Activated naive CD4-positive, alpha-beta T cell treated with anti-CD3 and anti-CD28 coated beads for 36 hours (primary cell): ENCODE measurements at regions of chr6 and their contacts with region 1.

Region 1: DNA sequence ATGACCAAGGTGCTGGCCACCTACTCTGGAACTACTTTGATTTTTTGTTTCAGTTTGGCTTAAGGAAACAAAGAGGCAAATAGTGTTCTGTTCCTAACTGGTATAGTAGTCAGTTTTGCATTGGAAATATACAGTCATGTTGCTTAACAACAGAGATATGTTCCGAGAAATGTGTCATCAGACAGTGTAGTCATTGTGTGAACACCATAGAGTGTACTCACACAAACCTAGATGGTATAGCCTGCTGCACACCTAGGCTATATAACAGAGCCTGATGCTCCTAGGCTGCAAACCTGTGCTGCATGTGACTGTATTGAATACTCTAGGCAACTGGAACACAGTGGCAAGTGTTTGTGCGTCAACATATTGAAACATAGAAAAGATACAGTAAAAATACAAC is 80.4 kb downstream of the ARID1B start:
- DNase-seq: peak; percentile 57
- H3K4me3 Mint-ChIP-seq: no peak overlapping the region
- H3K27ac Mint-ChIP-seq: peak overlapping the region; percentile 89
- H3K4me1 Mint-ChIP-seq: peaks cover 77% of the 10 kb centered on the region
- H3K27me3 Mint-ChIP-seq: no peaks in the 10 kb centered on the region

Region 2: GRCh38 chr6:156699017-156699421 is 158.6 kb before region 1 on chr6:
- CTCF ChIA-PET with region 1: no interaction called
- intact Hi-C with region 1: loop called (anchors 5 kb)
- DNase-seq: peak; percentile 23
- H3K4me3 Mint-ChIP-seq: no peak overlapping the region
- H3K27ac Mint-ChIP-seq: no peak overlapping the region
- H3K4me1 Mint-ChIP-seq: peaks cover 23% of the 10 kb centered on the region
- H3K27me3 Mint-ChIP-seq: peaks cover 5% of the 10 kb centered on the region

Region 3: GRCh38 chr6:156791320-156791850 is 66.2 kb before region 1 on chr6:
- CTCF ChIA-PET with region 1: no interaction called
- intact Hi-C with region 1: loop called (anchors 1 kb)
- DNase-seq: peak; percentile 60
- H3K4me3 Mint-ChIP-seq: no peak overlapping the region
- H3K27ac Mint-ChIP-seq: peak overlapping the region; percentile 48
- H3K4me1 Mint-ChIP-seq: peaks cover 89% of the 10 kb centered on the region
- H3K27me3 Mint-ChIP-seq: no peaks in the 10 kb centered on the region

Region 4: DNA sequence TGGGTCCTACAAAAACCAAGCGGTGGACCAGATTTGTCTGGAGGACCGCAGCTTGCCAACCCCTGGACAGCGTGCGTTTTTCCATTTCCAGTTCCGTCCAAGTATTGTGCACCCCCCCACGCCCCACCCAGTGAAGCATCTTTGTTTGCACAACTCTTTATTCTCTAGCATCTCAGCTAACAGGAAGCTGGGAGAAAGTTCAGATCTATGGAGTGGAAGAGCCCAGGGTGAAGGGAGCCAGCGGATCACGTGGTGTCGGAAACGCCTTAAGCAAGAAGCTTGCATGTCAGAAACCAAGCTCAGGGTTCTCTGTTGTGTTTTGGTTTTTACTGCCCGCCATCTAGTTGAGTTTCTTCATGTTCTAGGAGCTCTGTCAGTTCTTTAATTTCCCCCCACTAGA is 50.5 kb before region 1 on chr6:
- CTCF ChIA-PET with region 1: no interaction called
- intact Hi-C with region 1: no loop called
- DNase-seq: no peak
- H3K4me3 Mint-ChIP-seq: no peak overlapping the region
- H3K27ac Mint-ChIP-seq: no peak overlapping the region
- H3K4me1 Mint-ChIP-seq: peaks cover 85% of the 10 kb centered on the region
- H3K27me3 Mint-ChIP-seq: no peaks in the 10 kb centered on the region

Region 5: GRCh38 chr6:156876302-156876701 is 18.7 kb after region 1 on chr6:
- CTCF ChIA-PET with region 1: no interaction called
- intact Hi-C with region 1: no loop called
- DNase-seq: peak; percentile 19
- H3K4me3 Mint-ChIP-seq: no peak overlapping the region
- H3K27ac Mint-ChIP-seq: no peak overlapping the region
- H3K4me1 Mint-ChIP-seq: peaks cover 57% of the 10 kb centered on the region
- H3K27me3 Mint-ChIP-seq: no peaks in the 10 kb centered on the region

Region 6: DNA sequence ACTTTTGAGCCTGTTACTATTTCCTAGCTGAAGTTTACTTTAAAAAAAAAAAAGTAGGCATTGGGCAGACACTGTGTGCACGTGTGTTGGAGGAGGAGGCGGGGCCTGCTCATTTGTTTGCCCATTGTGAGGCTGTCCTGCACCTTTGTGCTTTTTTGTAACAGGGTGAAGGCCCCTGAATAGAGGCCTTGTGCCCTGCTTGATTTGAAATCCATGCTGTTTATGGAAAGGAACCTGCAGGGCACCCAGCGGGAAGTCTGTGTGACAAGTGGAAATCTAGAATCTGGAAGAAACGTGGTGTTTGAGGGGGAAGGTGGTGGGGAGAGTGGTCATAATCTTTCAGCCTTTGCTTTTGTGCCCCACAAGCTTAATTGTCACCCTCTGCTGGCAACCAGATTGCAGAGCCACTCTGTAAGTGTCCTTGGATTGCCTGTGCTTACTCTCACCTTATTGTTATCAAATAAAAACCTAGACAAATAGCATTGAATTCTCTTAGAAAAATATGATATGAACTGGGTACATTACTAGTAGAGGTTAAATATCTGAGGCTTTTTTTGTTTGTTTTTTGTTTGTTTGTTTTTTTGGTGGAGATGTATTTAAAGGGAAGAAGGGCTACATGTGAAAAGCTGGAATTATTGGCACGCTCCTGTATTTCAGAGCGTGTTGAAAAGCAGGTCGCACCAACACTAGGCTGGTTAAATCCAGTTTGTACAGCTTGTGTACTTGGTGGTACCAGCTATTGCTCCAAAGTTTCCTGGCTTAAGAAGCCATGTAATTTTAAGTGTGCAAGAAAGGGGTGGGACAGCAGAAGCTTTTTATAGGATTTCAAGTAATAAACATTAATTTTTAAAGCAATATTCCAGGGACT is 75.9 kb after region 1 on chr6:
- CTCF ChIA-PET with region 1: no interaction called
- intact Hi-C with region 1: loop called (anchors 2 kb)
- DNase-seq: no peak
- H3K4me3 Mint-ChIP-seq: no peak overlapping the region
- H3K27ac Mint-ChIP-seq: no peak overlapping the region
- H3K4me1 Mint-ChIP-seq: peaks cover 60% of the 10 kb centered on the region
- H3K27me3 Mint-ChIP-seq: no peaks in the 10 kb centered on the region

Region 7: GRCh38 chr6:157068691-157069324 is 211.2 kb after region 1 on chr6:
- CTCF ChIA-PET with region 1: no interaction called
- intact Hi-C with region 1: no loop called
- DNase-seq: no peak
- H3K4me3 Mint-ChIP-seq: no peak overlapping the region
- H3K27ac Mint-ChIP-seq: peak overlapping the region; percentile 22
- H3K4me1 Mint-ChIP-seq: peaks cover 41% of the 10 kb centered on the region
- H3K27me3 Mint-ChIP-seq: no peaks in the 10 kb centered on the region